Naive thymus-derived CD4-positive, alpha-beta T cell (primary cell): ENCODE measurements at regions of chr2 and their contacts with region 1.

Region 1: GRCh38 chr2:157898591-157898996 is 22.5 kb upstream of the ACVR1 start:
- DNase-seq: peak in 2 of 9 donors; percentile 54 to 60
- ATAC-seq: peak; percentile 63
- H3K4me3 ChIP-seq: peak overlapping the region; percentile 26
- H3K4me3 Mint-ChIP-seq: peak overlapping the region; percentile 74 to 93 (median 86)
- H3K27ac ChIP-seq: peak overlapping the region; percentile 78
- H3K27ac Mint-ChIP-seq: peak overlapping the region; percentile 94 to 100 (median 98)
- H3K4me1 ChIP-seq: peaks cover 44 to 59% of the 10 kb centered on the region in 2 donors
- H3K4me1 Mint-ChIP-seq: peaks cover 48 to 80% (median 72%) of the 10 kb centered on the region in 7 donors
- H3K27me3 ChIP-seq: no peaks in the 10 kb centered on the region
- H3K27me3 Mint-ChIP-seq: no peaks in the 10 kb centered on the region

Region 2: GRCh38 chr2:157229572-157229971 is 669.0 kb before region 1 on chr2:
- CTCF ChIA-PET with region 1: no interaction called
- POLR2A ChIA-PET with region 1: no interaction called
- intact Hi-C with region 1: no loop called
- DNase-seq: no peak
- ATAC-seq: no peak
- H3K4me3 ChIP-seq: no peak overlapping the region
- H3K4me3 Mint-ChIP-seq: no peak overlapping the region
- H3K27ac ChIP-seq: no peak overlapping the region
- H3K27ac Mint-ChIP-seq: no peak overlapping the region
- H3K4me1 ChIP-seq: no peaks in the 10 kb centered on the region
- H3K4me1 Mint-ChIP-seq: no peaks in the 10 kb centered on the region
- H3K27me3 ChIP-seq: no peaks in the 10 kb centered on the region
- H3K27me3 Mint-ChIP-seq: peaks cover 12 to 22% (median 18%) of the 10 kb centered on the region in 5 donors

Region 3: GRCh38 chr2:157327621-157328500 is 570.7 kb before region 1 on chr2:
- CTCF ChIA-PET with region 1: interaction called, 3 read pairs
- POLR2A ChIA-PET with region 1: no interaction called
- intact Hi-C with region 1: loop called (anchors 5 to 10 kb)
- DNase-seq: peak; percentile 60 to 89 (median 81)
- ATAC-seq: peak; percentile 97
- H3K4me3 ChIP-seq: no peak overlapping the region
- H3K4me3 Mint-ChIP-seq: peak overlapping the region; percentile 47 to 81 (median 60)
- H3K27ac ChIP-seq: peak overlapping the region; percentile 19
- H3K27ac Mint-ChIP-seq: peak overlapping the region; percentile 18 to 96 (median 85)
- H3K4me1 ChIP-seq: peaks cover 23 to 46% of the 10 kb centered on the region in 2 donors
- H3K4me1 Mint-ChIP-seq: peaks cover 36 to 65% (median 58%) of the 10 kb centered on the region in 7 donors
- H3K27me3 ChIP-seq: no peaks in the 10 kb centered on the region
- H3K27me3 Mint-ChIP-seq: no peaks in the 10 kb centered on the region

Region 4: DNA sequence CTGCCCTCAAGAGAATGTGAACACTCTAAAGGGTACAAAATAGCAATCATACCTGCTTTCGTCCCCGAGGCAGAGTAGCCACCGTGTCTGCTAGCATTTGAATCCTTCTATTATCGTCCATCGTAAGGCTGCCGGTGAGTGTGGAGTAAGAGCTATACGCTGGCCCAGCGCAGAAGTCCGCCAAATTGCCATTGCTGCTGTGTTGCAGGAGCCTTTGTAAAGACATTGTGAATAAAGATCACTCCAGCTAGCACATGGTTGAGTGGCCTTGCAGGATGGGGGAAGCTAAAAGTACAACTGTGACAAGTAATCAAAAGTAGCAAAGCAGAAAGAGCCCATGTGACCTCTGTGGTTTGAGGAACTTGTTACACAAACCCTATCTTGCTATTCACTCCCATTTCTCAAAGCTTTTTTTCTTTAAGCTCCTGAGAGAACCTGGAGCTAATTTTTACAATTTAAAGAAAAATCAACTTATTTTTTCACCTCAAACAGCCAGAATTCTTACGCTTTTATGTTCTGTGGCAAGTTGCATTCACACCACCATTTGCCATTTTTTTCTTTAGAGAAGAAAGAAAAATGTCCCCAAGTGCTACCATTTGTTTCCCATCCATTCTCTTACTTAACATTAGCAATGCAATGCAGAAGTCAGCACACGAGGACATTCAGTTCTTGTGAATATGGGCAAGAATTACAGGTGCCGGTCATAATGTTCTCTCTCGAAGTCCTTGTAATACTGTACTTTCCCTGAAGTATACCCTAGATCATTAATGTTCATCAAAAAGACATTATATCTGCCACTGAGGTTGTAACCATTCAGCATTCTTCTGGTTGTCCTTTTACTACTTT is 454.6 kb before region 1 on chr2 and contains the start of gene CYTIP:
- CTCF ChIA-PET with region 1: no interaction called
- POLR2A ChIA-PET with region 1: interaction called, 8 read pairs
- intact Hi-C with region 1: loop called in 1 of 2 experiments (anchors 2 kb)
- DNase-seq: peak; percentile 32 to 85 (median 78)
- ATAC-seq: peak; percentile 71
- H3K4me3 ChIP-seq: peak within 1 kb of the TSS; percentile 97
- H3K4me3 Mint-ChIP-seq: peak within 1 kb of the TSS; percentile 92 to 100 (median 97)
- H3K27ac ChIP-seq: peak within 1 kb of the TSS; percentile 89
- H3K27ac Mint-ChIP-seq: peak within 1 kb of the TSS; percentile 95 to 100 (median 98)
- H3K4me1 ChIP-seq: peaks cover 30 to 34% of the 10 kb centered on the region in 2 donors
- H3K4me1 Mint-ChIP-seq: peaks cover 32 to 48% (median 46%) of the 10 kb centered on the region in 7 donors
- H3K27me3 ChIP-seq: no peaks in the 10 kb centered on the region
- H3K27me3 Mint-ChIP-seq: no peaks in the 10 kb centered on the region
- total RNA-seq, gene CYTIP: 290 to 406 (median 363) TPM

Region 5: GRCh38 chr2:157492189-157492773 is 406.3 kb before region 1 on chr2:
- CTCF ChIA-PET with region 1: interaction called, 4 read pairs
- POLR2A ChIA-PET with region 1: no interaction called
- intact Hi-C with region 1: loop called in 1 of 2 experiments (anchors 5 kb)
- DNase-seq: peak; percentile 41 to 79 (median 68)
- ATAC-seq: peak; percentile 91
- H3K4me3 ChIP-seq: no peak overlapping the region
- H3K4me3 Mint-ChIP-seq: peak overlapping the region in 6 of 10 donors; percentile 1 to 39 (median 14)
- H3K27ac ChIP-seq: no peak overlapping the region
- H3K27ac Mint-ChIP-seq: peak overlapping the region in 3 of 9 donors; percentile 9 to 19 (median 13)
- H3K4me1 ChIP-seq: peaks cover 0 to 21% of the 10 kb centered on the region in 2 donors
- H3K4me1 Mint-ChIP-seq: peaks cover 10 to 67% (median 59%) of the 10 kb centered on the region in 7 donors
- H3K27me3 ChIP-seq: no peaks in the 10 kb centered on the region
- H3K27me3 Mint-ChIP-seq: no peaks in the 10 kb centered on the region

Region 6: DNA sequence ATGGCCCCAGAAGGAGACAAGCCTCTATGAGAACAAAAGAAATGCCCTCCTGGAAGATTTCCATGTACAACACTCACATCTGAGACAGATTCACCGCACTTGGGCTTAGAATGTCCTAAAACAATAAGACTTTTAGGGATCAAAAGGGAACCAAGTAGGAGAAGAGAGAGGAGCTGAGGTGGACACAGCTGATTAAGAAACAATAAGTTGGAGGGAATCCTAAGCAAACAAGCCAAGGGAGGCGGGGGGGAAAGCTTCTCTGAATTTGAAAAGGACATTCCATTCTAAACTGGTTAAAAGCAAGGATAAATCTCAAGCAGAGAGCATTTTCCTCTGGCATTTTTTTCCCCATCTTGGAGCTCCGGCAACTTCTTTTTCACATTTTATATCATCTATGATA is 32.4 kb before region 1 on chr2:
- CTCF ChIA-PET with region 1: interaction called, 6 read pairs
- POLR2A ChIA-PET with region 1: interaction called, 3 read pairs
- intact Hi-C with region 1: loop called (anchors 5 kb)
- DNase-seq: no peak
- ATAC-seq: no peak
- H3K4me3 ChIP-seq: no peak overlapping the region
- H3K4me3 Mint-ChIP-seq: no peak overlapping the region
- H3K27ac ChIP-seq: no peak overlapping the region
- H3K27ac Mint-ChIP-seq: no peak overlapping the region
- H3K4me1 ChIP-seq: peaks cover 0 to 3% of the 10 kb centered on the region in 2 donors
- H3K4me1 Mint-ChIP-seq: peaks cover 16 to 59% (median 50%) of the 10 kb centered on the region in 7 donors
- H3K27me3 ChIP-seq: no peaks in the 10 kb centered on the region
- H3K27me3 Mint-ChIP-seq: no peaks in the 10 kb centered on the region

Region 7: GRCh38 chr2:159712143-159712928 is 1813.7 kb after region 1 on chr2 and contains the start of gene MARCHF7:
- CTCF ChIA-PET with region 1: no interaction called
- POLR2A ChIA-PET with region 1: no interaction called
- intact Hi-C with region 1: loop called in 1 of 2 experiments (anchors 5 kb)
- DNase-seq: peak; percentile 95 to 99 (median 98)
- ATAC-seq: peak; percentile 96
- H3K4me3 ChIP-seq: peak within 1 kb of the TSS; percentile 98
- H3K4me3 Mint-ChIP-seq: peak within 1 kb of the TSS; percentile 95 to 100 (median 100)
- H3K27ac ChIP-seq: peak within 1 kb of the TSS; percentile 90
- H3K27ac Mint-ChIP-seq: peak within 1 kb of the TSS; percentile 97 to 100 (median 99)
- H3K4me1 ChIP-seq: peaks cover 43 to 44% of the 10 kb centered on the region in 2 donors
- H3K4me1 Mint-ChIP-seq: peaks cover 36 to 63% (median 50%) of the 10 kb centered on the region in 7 donors
- H3K27me3 ChIP-seq: no peaks in the 10 kb centered on the region
- H3K27me3 Mint-ChIP-seq: no peaks in the 10 kb centered on the region
- total RNA-seq, gene MARCHF7: 64.3 to 120 (median 80.2) TPM